ENCODE measurements at regions of chr2 and their contacts with region 1.

Region 1: DNA sequence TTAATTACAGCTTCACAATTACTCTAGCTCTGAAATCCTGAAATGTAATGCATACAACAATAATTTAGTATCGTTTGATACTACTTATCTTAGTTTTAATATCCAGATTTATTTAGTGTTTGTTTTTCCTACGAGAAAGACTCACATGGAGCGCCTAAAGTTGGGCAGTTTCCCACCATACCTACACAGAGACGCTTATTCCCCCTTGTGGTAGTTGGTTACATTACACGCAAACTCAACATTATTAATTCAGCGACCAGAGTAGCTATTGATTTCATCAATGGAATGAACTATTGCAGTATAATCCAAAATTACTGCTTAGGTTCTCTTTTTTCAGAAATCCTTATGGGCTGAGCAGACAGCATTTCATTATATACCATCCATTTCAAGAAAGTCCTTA is 164.0 kb upstream of the REG3G start:
- DNase-seq: no peak
- H3K4me3 ChIP-seq: no peak overlapping the region
- H3K27ac ChIP-seq: no peak overlapping the region
- H3K4me1 ChIP-seq: no peaks in the 10 kb centered on the region; a peak in 1 of 7 replicates
- H3K27me3 ChIP-seq: no peaks in the 10 kb centered on the region
- CTCF ChIP-seq: peak in 2 of 3 experiments; percentile 65; a peak in 3 of 4 replicates
- EP300 ChIP-seq: no peak
- POLR2A ChIP-seq: no peak
- RAD21 ChIP-seq: peak; percentile 77

Region 2: GRCh38 chr2:78676921-78677696 is 184.4 kb before region 1 on chr2:
- CTCF ChIA-PET with region 1: interaction called, 13 read pairs
- POLR2A ChIA-PET with region 1: no interaction called
- DNase-seq: no peak
- H3K4me3 ChIP-seq: no peak overlapping the region
- H3K27ac ChIP-seq: no peak overlapping the region
- H3K4me1 ChIP-seq: no peaks in the 10 kb centered on the region; a peak in 1 of 7 replicates
- H3K27me3 ChIP-seq: no peaks in the 10 kb centered on the region
- CTCF ChIP-seq: peak; percentile 33 to 36 (median 36); a peak in 3 of 4 replicates
- EP300 ChIP-seq: no peak
- POLR2A ChIP-seq: no peak
- RAD21 ChIP-seq: peak; percentile 51 to 60

Region 3: DNA sequence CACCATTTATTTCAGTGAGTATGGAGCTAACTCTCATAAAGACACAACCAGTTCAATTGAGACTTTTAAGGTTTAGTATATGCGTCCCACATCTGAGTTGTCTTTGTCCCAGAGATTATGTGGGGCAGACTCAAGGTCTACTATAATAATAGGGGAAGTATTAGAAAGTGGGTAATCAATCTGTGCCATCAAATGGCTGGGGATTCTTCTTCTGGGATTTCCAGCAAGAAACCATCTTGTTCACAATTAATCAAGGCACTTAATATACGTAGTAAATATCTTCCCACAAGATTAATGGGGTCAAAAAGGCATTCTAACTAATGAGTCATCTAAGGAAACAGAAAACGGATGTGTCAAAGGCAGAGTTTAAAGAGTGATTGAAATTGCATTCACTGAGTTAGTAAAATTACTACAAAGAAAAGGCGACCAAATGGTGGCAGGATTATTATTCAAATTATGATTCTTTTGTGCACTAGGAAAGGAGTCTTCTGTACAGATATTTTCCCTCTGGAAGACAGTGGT is 15.8 kb before region 1 on chr2:
- CTCF ChIA-PET with region 1: interaction called, 18 read pairs
- POLR2A ChIA-PET with region 1: no interaction called
- DNase-seq: no peak
- H3K4me3 ChIP-seq: no peak overlapping the region
- H3K27ac ChIP-seq: no peak overlapping the region
- H3K4me1 ChIP-seq: no peaks in the 10 kb centered on the region
- H3K27me3 ChIP-seq: peaks cover 2 to 13% (median 6%) of the 10 kb centered on the region in 4 experiments
- CTCF ChIP-seq: no peak
- EP300 ChIP-seq: no peak
- POLR2A ChIP-seq: no peak
- RAD21 ChIP-seq: no peak